Dendritic cell treated with granulocyte-macrophage colony-stimulating factor and Interleukin-4, amounts not matched to agents 40 ng/mL and 50 ng/mL, for 4 days (primary cell): ENCODE measurements at regions of chr1 and their contacts with region 1.

Region 1: GRCh38 chr1:203117611-203118575 is 9.6 kb upstream of the ADORA1 start:
- H3K4me3 Mint-ChIP-seq: no peak overlapping the region
- H3K27ac Mint-ChIP-seq: no peak overlapping the region
- H3K4me1 Mint-ChIP-seq: peaks cover 17% of the 10 kb centered on the region
- H3K27me3 Mint-ChIP-seq: peaks cover 67% of the 10 kb centered on the region

Region 2: GRCh38 chr1:203038891-203039608 is 78.8 kb before region 1 on chr1:
- intact Hi-C with region 1: loop called (anchors 5 kb)
- H3K4me3 Mint-ChIP-seq: no peak overlapping the region
- H3K27ac Mint-ChIP-seq: no peak overlapping the region
- H3K4me1 Mint-ChIP-seq: peaks cover 24% of the 10 kb centered on the region
- H3K27me3 Mint-ChIP-seq: peaks cover 43% of the 10 kb centered on the region

Region 3: GRCh38 chr1:203084588-203085502 is 33.0 kb before region 1 on chr1:
- intact Hi-C with region 1: no loop called
- H3K4me3 Mint-ChIP-seq: no peak overlapping the region
- H3K27ac Mint-ChIP-seq: no peak overlapping the region
- H3K4me1 Mint-ChIP-seq: peaks cover 38% of the 10 kb centered on the region
- H3K27me3 Mint-ChIP-seq: peaks cover 18% of the 10 kb centered on the region